ENCODE measurements at regions of chr15 and their contacts with region 1.

Region 1: GRCh38 chr15:78422571-78423340 is 15.3 kb upstream of the IREB2 start:
- DNase-seq: peak; percentile 82
- H3K4me3 ChIP-seq: no peak overlapping the region
- H3K27ac ChIP-seq: peak overlapping the region; percentile 13
- H3K4me1 ChIP-seq: peaks cover 4% of the 10 kb centered on the region
- H3K27me3 ChIP-seq: no peaks in the 10 kb centered on the region
- CTCF ChIP-seq: peak; percentile 93

Region 2: DNA sequence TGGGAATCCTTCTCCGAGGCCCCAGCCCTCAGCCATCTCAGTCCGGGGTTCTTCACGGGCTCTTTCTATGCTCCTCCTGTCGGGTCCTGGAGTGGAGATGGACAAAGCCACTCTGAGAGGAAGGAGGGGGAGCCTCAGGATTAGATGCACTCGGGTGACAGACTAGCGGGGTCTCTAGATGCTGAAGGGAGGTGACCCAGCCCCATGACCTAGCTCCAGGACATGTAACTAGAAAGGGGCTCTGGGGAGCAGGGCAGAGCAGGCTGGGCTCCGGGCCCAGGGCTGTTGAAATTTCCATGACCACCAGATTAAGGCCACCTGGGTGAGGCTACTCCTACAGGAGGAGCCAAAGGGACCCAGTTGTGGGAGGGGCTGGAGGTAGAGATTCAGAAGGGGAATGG is 108.6 kb before region 1 on chr15:
- intact Hi-C with region 1: loop called (anchors 5 kb)
- DNase-seq: no peak
- H3K4me3 ChIP-seq: no peak overlapping the region
- H3K27ac ChIP-seq: no peak overlapping the region
- H3K4me1 ChIP-seq: no peaks in the 10 kb centered on the region
- H3K27me3 ChIP-seq: no peaks in the 10 kb centered on the region
- CTCF ChIP-seq: no peak

Region 3: DNA sequence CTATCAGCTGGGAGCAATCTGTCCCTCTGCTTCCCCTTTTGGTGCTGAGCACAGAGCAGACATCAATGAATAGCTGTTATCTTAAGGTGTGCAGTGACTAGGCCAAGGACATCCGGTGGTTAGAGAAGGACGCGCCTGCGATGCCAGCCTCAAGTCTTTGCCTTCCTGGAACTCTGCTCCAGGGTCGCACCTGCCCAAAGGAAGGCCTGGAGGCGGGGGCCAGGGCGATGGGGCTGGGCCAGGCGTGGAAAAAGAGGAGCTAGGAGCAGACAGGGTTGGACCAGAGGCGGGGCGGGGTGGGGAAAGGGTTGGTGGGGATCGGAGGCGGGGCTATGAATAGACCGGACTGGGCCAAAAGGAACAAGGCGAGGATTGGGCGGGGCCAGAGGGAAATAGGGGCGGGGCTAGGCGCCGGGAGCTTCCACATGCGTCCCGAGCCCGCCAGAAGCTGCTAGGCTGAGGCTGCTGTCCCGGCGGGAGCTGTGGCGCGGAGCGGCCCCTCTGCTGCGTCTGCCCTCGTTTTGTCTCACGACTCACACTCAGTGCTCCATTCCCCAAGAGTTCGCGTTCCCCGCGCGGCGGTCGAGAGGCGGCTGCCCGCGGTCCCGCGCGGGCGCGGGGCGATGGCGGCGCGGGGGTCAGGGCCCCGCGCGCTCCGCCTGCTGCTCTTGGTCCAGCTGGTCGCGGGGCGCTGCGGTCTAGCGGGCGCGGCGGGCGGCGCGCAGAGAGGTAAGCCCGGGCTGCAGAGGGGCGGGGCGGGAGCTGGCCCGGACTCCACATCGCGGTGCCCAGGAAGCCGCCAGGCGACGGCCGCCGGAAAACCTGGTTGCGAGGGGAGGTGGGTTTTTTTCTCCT is 142.6 kb after region 1 on chr15 and contains the start of gene CHRNA5:
- intact Hi-C with region 1: no loop called
- DNase-seq: peak; percentile 97
- H3K4me3 ChIP-seq: peak within 1 kb of the TSS; percentile 56
- H3K27ac ChIP-seq: peak within 1 kb of the TSS; percentile 42
- H3K4me1 ChIP-seq: no peaks in the 10 kb centered on the region
- H3K27me3 ChIP-seq: no peaks in the 10 kb centered on the region
- CTCF ChIP-seq: no peak
- total RNA-seq, gene CHRNA5: 9.7 to 10.3 TPM